Naive thymus-derived CD8-positive, alpha-beta T cell (primary cell): ENCODE measurements at regions of chr18 and their contacts with region 1.

Region 1: DNA sequence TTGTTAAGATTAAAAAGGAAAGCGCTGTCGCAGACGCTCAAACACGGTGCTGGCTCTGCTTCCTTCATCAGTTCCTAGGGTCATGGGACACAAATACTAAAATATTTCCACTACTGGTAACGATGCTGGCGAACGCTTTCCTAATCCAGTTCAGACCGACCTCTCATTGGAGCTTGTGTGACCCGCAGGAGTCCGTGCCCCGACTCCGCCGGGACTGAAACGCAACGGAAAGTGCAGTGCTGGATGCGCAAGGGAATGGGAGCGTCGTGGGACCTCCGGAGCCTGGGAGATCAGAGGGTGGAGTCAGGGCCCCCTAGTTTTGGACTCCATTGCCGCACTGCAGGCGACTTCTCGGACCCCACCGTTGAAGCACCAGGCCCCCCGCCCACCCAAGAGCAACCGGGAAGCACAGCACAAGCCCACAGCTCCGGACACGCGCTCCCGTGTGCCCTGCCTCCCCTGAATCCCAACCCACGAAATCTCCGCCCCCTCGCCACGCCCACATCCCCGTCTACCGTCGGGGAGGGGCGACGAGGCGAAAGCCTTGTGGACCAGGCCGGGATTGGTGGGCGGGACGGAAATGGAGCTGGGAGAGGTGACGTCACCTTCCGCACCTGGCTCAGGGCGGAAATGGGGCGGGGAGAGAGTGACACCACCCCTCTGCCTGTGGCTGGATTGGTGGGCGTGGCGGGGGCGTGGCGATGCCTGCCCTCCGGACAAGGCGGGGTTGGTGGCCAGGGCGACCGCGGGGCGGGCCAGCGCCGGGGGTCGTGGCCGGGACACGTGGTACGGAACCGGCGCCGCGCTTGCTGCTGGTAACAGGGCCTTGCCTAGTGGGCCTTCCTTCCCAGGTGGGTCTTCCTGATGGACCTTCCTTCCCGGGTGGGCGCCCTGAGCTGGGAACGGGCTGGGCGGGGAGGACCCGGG is at the start of gene CNDP2:
- DNase-seq: peak; percentile 95 to 99 (median 97)
- ATAC-seq: peak; percentile 63 to 72
- H3K4me3 Mint-ChIP-seq: peak within 1 kb of the TSS; percentile 88 to 98 (median 96)
- H3K27ac Mint-ChIP-seq: peak within 1 kb of the TSS; percentile 96 to 99 (median 98)
- H3K4me1 Mint-ChIP-seq: peaks cover 27 to 56% (median 50%) of the 10 kb centered on the region in 4 donors
- H3K27me3 Mint-ChIP-seq: no peaks in the 10 kb centered on the region
- polyA plus RNA-seq, gene CNDP2: 97.0 to 139 (median 111) TPM

Region 2: GRCh38 chr18:74255131-74255616 is 240.7 kb before region 1 on chr18:
- POLR2A ChIA-PET with region 1: no interaction called
- DNase-seq: no peak
- ATAC-seq: no peak
- H3K4me3 Mint-ChIP-seq: no peak overlapping the region
- H3K27ac Mint-ChIP-seq: peak overlapping the region in 2 of 10 donors; percentile 12 to 22
- H3K4me1 Mint-ChIP-seq: peaks cover 0 to 4% (median 0%) of the 10 kb centered on the region in 4 donors
- H3K27me3 Mint-ChIP-seq: no peaks in the 10 kb centered on the region

Region 3: DNA sequence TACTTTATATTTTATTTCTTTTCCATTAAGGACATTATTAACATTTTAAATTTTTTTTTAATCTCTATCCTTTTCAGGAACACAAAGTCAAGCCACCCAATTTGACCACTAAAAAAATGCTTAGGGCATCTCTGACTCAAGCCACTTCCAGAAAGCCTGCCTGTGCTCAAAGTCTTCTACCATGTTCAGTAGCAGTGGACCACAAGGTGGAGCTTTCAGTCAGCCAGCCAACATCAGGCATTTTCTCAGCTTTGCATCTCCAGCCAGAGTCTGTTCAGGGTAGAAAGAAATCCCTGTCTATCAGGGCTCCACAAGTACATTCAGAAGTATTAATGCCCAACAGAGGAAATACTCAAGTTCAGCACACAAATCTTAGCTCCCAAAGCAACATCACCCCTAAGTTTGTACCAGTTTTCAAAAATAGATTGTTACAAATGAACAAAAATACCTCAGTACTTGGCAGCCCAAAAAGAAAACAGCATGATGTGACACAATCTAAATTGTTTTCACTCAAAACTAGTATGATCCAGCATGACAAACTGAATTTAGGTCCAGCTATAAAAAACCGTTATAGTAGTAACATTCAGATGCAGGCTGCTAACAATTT is 142.6 kb before region 1 on chr18:
- POLR2A ChIA-PET with region 1: interaction called, 31 read pairs
- DNase-seq: peak; percentile 27 to 84 (median 64)
- ATAC-seq: peak; percentile 96 to 97
- H3K4me3 Mint-ChIP-seq: no peak overlapping the region
- H3K27ac Mint-ChIP-seq: peak overlapping the region in 5 of 10 donors; percentile 44 to 75 (median 66)
- H3K4me1 Mint-ChIP-seq: peaks cover 2 to 14% (median 11%) of the 10 kb centered on the region in 4 donors
- H3K27me3 Mint-ChIP-seq: peaks cover 0 to 3% (median 0%) of the 10 kb centered on the region in 5 donors

Region 4: GRCh38 chr18:74512321-74513053 is 16.6 kb after region 1 on chr18:
- POLR2A ChIA-PET with region 1: no interaction called
- DNase-seq: no peak
- ATAC-seq: no peak
- H3K4me3 Mint-ChIP-seq: no peak overlapping the region
- H3K27ac Mint-ChIP-seq: peak overlapping the region in 4 of 10 donors; percentile 25 to 66 (median 40)
- H3K4me1 Mint-ChIP-seq: peaks cover 0 to 14% (median 8%) of the 10 kb centered on the region in 4 donors
- H3K27me3 Mint-ChIP-seq: no peaks in the 10 kb centered on the region

Region 5: DNA sequence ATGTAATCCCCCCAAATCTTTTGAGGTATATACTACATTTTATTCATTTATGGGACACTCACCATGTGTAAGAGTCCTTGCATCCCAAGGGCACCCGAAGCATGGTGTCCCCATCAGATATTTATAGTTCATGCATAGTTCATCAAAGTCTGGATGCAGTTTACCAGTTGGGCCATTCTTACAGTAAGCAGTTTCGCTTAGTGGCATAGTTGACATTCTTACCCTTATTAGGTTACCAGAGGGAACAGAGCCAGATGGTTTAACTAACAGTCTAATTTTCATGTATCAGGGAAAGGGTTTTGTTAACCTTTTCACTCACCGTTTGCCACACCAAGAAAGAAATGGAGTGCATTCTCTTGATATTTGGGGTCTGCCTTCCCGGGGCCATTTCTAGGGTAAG is 108.9 kb after region 1 on chr18:
- POLR2A ChIA-PET with region 1: no interaction called
- DNase-seq: no peak
- ATAC-seq: no peak
- H3K4me3 Mint-ChIP-seq: no peak overlapping the region
- H3K27ac Mint-ChIP-seq: no peak overlapping the region
- H3K4me1 Mint-ChIP-seq: peaks cover 24 to 60% (median 44%) of the 10 kb centered on the region in 4 donors
- H3K27me3 Mint-ChIP-seq: no peaks in the 10 kb centered on the region